CD4-positive, alpha-beta memory T cell (primary cell): ENCODE measurements at regions of chr1 and their contacts with region 1.

Region 1: GRCh38 chr1:156689035-156689952 is 12.1 kb upstream of the NES start:
- DNase-seq: peak; percentile 70 to 77 (median 73)
- H3K4me3 ChIP-seq: peak overlapping the region in 1 of 2 donors; percentile 2
- H3K4me3 Mint-ChIP-seq: peak overlapping the region in 5 of 8 donors; percentile 25 to 69 (median 68)
- H3K27ac ChIP-seq: no peak overlapping the region
- H3K27ac Mint-ChIP-seq: peak overlapping the region in 2 of 7 donors; percentile 33 to 89
- H3K4me1 ChIP-seq: peaks cover 25% of the 10 kb centered on the region
- H3K4me1 Mint-ChIP-seq: peaks cover 8 to 23% (median 17%) of the 10 kb centered on the region in 4 donors
- H3K27me3 ChIP-seq: peaks cover 29% of the 10 kb centered on the region
- H3K27me3 Mint-ChIP-seq: peaks cover 30 to 39% of the 10 kb centered on the region in 2 donors

Region 2: DNA sequence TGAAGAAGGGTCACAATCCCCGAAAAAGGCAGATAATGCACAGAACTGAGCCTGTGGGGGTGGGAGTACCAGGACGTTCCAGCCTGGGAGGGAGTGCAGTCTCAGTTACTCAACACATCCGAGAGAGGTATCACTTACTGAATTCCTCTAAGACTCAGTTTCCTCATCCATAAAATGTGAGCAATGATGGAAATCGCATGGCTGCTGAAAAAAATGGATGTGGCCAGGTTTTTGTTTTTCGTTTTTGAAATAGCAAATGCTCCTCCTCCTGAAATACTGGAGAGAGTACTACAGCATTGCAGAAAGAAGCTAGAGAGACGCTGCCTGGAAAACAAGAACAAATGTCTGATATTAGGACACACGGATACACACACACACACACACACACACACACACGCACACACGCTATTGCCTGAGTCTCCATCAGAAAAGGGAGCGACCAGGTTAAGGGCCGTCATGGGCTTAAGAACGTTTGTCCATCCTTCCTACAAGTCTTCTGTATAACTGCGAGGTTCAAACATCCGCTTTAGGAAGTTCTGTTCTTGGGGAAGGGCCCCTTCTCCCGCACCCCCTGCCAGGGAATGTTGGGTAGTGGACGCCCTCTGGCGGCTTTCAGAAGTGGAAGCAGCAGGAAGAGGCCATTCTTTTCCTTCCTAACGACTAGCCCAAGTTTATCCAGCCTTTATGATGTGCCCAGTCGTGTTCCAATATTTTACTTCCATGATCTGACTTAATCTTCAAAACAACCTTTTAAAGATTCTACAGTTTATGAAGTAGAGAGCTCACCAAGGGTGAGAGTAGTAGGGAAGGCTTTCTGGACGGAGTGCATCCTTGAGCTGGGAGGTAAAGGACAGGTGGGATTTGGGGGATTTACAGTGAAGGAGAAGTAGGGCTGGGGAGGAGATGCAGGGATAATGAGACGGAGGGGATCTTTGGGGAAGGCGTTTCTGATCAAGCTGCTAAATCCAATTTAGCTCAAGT is 11.4 kb before region 1 on chr1:
- CTCF ChIA-PET with region 1: interaction called, 36 read pairs
- POLR2A ChIA-PET with region 1: no interaction called
- intact Hi-C with region 1: no loop called
- DNase-seq: peak in 4 of 5 donors; percentile 28 to 37 (median 32)
- H3K4me3 ChIP-seq: no peak overlapping the region
- H3K4me3 Mint-ChIP-seq: peak overlapping the region in 7 of 8 donors; percentile 46 to 74 (median 54)
- H3K27ac ChIP-seq: no peak overlapping the region
- H3K27ac Mint-ChIP-seq: peak overlapping the region in 3 of 7 donors; percentile 21 to 69 (median 60)
- H3K4me1 ChIP-seq: peaks cover 14% of the 10 kb centered on the region
- H3K4me1 Mint-ChIP-seq: peaks cover 1 to 14% (median 12%) of the 10 kb centered on the region in 4 donors
- H3K27me3 ChIP-seq: peaks cover 34% of the 10 kb centered on the region
- H3K27me3 Mint-ChIP-seq: peaks cover 40 to 50% of the 10 kb centered on the region in 2 donors

Region 3: DNA sequence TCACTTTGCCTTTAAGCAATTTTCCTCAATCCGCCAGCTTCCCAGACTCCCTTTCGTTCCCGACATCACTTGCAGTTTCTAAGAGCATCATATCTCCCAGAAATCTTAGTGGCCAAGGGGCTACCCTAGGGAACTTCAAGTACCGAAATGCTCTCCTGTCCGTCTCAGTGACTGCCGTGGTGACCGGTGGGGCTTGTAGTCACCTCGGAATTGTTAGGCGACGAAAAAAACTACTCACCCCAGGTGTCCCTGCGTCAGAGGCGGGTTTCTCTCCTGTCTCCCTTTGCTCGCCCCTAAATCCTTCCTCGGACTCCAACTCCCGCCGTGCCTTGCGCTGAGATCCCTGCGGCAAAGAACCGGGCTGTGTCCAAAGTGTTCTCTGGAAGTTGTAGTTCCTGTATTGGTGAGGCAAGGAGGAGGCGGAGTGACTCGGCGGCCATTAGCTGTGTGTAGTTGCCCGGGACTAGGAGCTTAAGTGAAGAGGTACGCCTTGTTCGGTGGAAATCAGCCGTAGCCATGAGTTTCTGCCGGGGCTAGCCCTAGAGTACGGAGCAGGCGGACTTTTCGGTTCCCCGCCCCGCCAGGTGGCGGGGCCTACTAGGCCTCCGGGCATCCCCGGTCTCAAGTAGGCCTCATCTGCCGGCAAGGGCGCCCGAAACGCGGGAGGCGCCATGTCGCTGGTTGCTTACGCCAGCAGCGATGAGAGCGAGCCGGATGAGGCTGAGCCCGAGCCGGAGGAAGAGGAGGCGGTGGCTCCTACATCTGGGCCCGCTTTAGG is 78.0 kb after region 1 on chr1 and contains the start of gene PRCC:
- CTCF ChIA-PET with region 1: interaction called, 16 read pairs
- POLR2A ChIA-PET with region 1: interaction called, 5 read pairs
- intact Hi-C with region 1: no loop called
- DNase-seq: peak; percentile 97 to 100 (median 99)
- H3K4me3 ChIP-seq: peak within 1 kb of the TSS; percentile 98 to 99
- H3K4me3 Mint-ChIP-seq: no peak within 1 kb of the TSS
- H3K27ac ChIP-seq: peak within 1 kb of the TSS; percentile 98
- H3K27ac Mint-ChIP-seq: no peak within 1 kb of the TSS
- H3K4me1 ChIP-seq: peaks cover 48% of the 10 kb centered on the region
- H3K4me1 Mint-ChIP-seq: peaks cover 24 to 39% (median 34%) of the 10 kb centered on the region in 4 donors
- H3K27me3 ChIP-seq: no peaks in the 10 kb centered on the region
- H3K27me3 Mint-ChIP-seq: no peaks in the 10 kb centered on the region
- total RNA-seq, gene PRCC: 60.9 to 61.3 TPM

Region 4: GRCh38 chr1:156797212-156797871 is 108.0 kb after region 1 on chr1:
- CTCF ChIA-PET with region 1: interaction called, 11 read pairs
- POLR2A ChIA-PET with region 1: no interaction called
- intact Hi-C with region 1: no loop called
- DNase-seq: peak; percentile 66 to 75 (median 74)
- H3K4me3 ChIP-seq: no peak overlapping the region
- H3K4me3 Mint-ChIP-seq: no peak overlapping the region
- H3K27ac ChIP-seq: no peak overlapping the region
- H3K27ac Mint-ChIP-seq: peak overlapping the region in 6 of 7 donors; percentile 12 to 45 (median 24)
- H3K4me1 ChIP-seq: peaks cover 17% of the 10 kb centered on the region
- H3K4me1 Mint-ChIP-seq: peaks cover 18 to 30% (median 21%) of the 10 kb centered on the region in 4 donors
- H3K27me3 ChIP-seq: no peaks in the 10 kb centered on the region
- H3K27me3 Mint-ChIP-seq: no peaks in the 10 kb centered on the region